A673 (cell line): ENCODE measurements at regions of chr12 and their contacts with region 1.

Region 1: GRCh38 chr12:120317224-120318105 is 10.1 kb downstream of the PLA2G1B start:
- DNase-seq: peak; percentile 100
- H3K4me3 ChIP-seq: peak overlapping the region; percentile 50
- H3K27ac ChIP-seq: peak overlapping the region; percentile 61
- H3K4me1 ChIP-seq: peaks cover 4% of the 10 kb centered on the region
- H3K27me3 ChIP-seq: no peaks in the 10 kb centered on the region
- CTCF ChIP-seq: peak; percentile 77

Region 2: GRCh38 chr12:119989669-119990389 is 327.6 kb before region 1 on chr12:
- CTCF ChIA-PET with region 1: no interaction called
- POLR2A ChIA-PET with region 1: no interaction called
- intact Hi-C with region 1: no loop called
- DNase-seq: peak; percentile 71
- H3K4me3 ChIP-seq: peak overlapping the region; percentile 61
- H3K27ac ChIP-seq: no peak overlapping the region
- H3K4me1 ChIP-seq: no peaks in the 10 kb centered on the region
- H3K27me3 ChIP-seq: peaks cover 38% of the 10 kb centered on the region
- CTCF ChIP-seq: no peak

Region 3: GRCh38 chr12:120301962-120302815 is 15.3 kb before region 1 on chr12 and contains the start of gene SIRT4:
- CTCF ChIA-PET with region 1: interaction called, 19 read pairs
- POLR2A ChIA-PET with region 1: no interaction called
- intact Hi-C with region 1: no loop called
- DNase-seq: peak; percentile 96
- H3K4me3 ChIP-seq: peak within 1 kb of the TSS; percentile 71
- H3K27ac ChIP-seq: peak within 1 kb of the TSS; percentile 83
- H3K4me1 ChIP-seq: peaks cover 3% of the 10 kb centered on the region
- H3K27me3 ChIP-seq: no peaks in the 10 kb centered on the region
- CTCF ChIP-seq: peak; percentile 95
- total RNA-seq, gene SIRT4: 3.7 and 4.8 TPM in 2 replicates

Region 4: GRCh38 chr12:120437754-120438494 is 120.5 kb after region 1 on chr12 and contains the start of gene COX6A1:
- CTCF ChIA-PET with region 1: no interaction called
- POLR2A ChIA-PET with region 1: interaction called, 5 read pairs
- intact Hi-C with region 1: loop called (anchors 10 kb)
- DNase-seq: peak; percentile 99
- H3K4me3 ChIP-seq: peak within 1 kb of the TSS; percentile 74
- H3K27ac ChIP-seq: peak within 1 kb of the TSS; percentile 69
- H3K4me1 ChIP-seq: peaks cover 12% of the 10 kb centered on the region
- H3K27me3 ChIP-seq: no peaks in the 10 kb centered on the region
- CTCF ChIP-seq: no peak
- total RNA-seq, gene COX6A1: 435 and 460 TPM in 2 replicates

Region 5: DNA sequence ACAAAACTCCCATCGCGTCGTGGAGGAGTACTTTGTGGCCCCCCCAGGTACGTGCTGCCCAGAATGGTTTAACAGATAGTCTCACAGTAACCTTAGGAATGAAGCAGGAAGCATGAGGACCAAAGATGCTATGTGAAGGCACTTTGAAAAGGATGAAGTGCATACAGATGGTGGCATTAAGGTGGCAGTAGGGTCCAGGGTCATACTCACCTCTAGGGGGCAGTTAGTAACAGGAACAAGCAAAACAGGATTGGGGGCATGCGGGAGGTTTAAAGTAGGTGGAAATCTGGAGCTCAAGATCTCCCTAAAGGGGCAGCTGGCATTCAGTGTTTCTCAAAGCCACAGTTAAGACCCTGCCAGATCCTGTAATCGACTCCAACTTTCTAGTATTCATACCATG is 139.7 kb after region 1 on chr12:
- CTCF ChIA-PET with region 1: no interaction called
- POLR2A ChIA-PET with region 1: no interaction called
- intact Hi-C with region 1: no loop called
- DNase-seq: no peak
- H3K4me3 ChIP-seq: no peak overlapping the region
- H3K27ac ChIP-seq: no peak overlapping the region
- H3K4me1 ChIP-seq: no peaks in the 10 kb centered on the region
- H3K27me3 ChIP-seq: no peaks in the 10 kb centered on the region
- CTCF ChIP-seq: peak; percentile 43; the same call in 1 of the 2 replicates

Region 6: GRCh38 chr12:120580787-120581723 is 263.6 kb after region 1 on chr12 and contains the start of gene POP5:
- CTCF ChIA-PET with region 1: no interaction called
- POLR2A ChIA-PET with region 1: no interaction called
- intact Hi-C with region 1: no loop called
- DNase-seq: peak; percentile 99
- H3K4me3 ChIP-seq: peak within 1 kb of the TSS; percentile 89
- H3K27ac ChIP-seq: peak within 1 kb of the TSS; percentile 59
- H3K4me1 ChIP-seq: peaks cover 10% of the 10 kb centered on the region
- H3K27me3 ChIP-seq: no peaks in the 10 kb centered on the region
- CTCF ChIP-seq: no peak
- total RNA-seq, gene POP5: 41.0 and 42.4 TPM in 2 replicates